GM10248 (cell line): ENCODE measurements at regions of chr2 and their contacts with region 1.

Region 1: GRCh38 chr2:241110607-241111439 is 8.7 kb upstream of the MTERF4 start:
- DNase-seq: peak; percentile 73
- CTCF ChIP-seq: no peak

Region 2: GRCh38 chr2:241123816-241124536 is 13.2 kb after region 1 on chr2:
- CTCF ChIA-PET with region 1: interaction called, 17 read pairs
- POLR2A ChIA-PET with region 1: interaction called, 4 read pairs
- DNase-seq: no peak
- CTCF ChIP-seq: no peak